ENCODE measurements at regions of chr11 and their contacts with region 1.

Region 1: DNA sequence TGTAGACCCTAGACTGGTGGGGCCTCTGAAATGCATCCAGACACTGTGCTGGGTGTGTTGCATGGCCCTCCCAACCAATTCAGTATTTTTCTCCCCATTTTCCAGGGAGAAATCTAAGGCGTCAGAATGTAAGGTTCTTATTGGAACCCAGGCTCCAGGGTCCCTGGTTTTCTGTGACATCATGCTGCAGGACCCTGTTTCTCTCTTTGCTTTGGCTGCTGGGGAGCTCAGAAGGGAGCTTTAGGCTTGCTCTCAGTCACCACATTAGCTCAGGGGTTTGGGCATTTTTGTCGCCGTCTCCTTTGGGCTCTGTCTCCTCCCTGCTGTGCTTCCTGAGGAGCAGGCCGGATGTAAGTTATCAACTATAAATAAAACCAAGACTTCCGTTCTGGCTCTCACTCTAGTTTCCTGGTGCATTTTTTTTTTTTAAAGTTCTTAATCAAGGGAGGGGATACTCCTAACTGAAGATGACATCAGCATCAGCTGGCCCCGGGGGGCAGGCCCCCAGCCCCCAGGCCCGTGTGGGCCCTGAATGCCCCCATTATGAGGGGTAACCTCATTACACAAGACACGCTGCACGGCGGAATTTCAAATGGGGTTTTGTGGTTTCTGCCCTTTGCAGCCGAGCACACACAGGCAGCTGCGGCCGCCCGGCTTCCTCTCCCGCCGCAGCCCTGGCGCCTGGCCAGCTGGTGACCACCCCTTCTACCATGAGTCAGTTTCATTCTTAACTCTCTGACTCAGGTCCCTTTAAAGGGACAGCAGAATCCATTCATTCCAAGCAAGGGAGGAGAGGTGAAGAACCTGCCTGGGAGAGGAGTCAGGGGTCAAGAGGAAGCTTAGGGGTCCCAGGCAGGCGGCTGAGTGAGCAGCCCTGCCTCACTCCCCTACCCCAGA is 3.2 kb downstream of the MYEOV start:
- DNase-seq: peak; percentile 85
- H3K4me3 ChIP-seq: peak overlapping the region; percentile 72
- H3K27ac ChIP-seq: peak overlapping the region; percentile 84
- H3K4me1 ChIP-seq: peaks cover 68% of the 10 kb centered on the region
- CTCF ChIP-seq: no peak

Region 2: GRCh38 chr11:69101115-69101791 is 195.9 kb before region 1 on chr11:
- CTCF ChIA-PET with region 1: interaction called, 4 read pairs
- POLR2A ChIA-PET with region 1: no interaction called
- intact Hi-C with region 1: loop called (anchors 1 kb)
- DNase-seq: peak; percentile 60
- H3K4me3 ChIP-seq: no peak overlapping the region
- H3K27ac ChIP-seq: no peak overlapping the region
- H3K4me1 ChIP-seq: no peaks in the 10 kb centered on the region
- CTCF ChIP-seq: peak; percentile 90

Region 3: DNA sequence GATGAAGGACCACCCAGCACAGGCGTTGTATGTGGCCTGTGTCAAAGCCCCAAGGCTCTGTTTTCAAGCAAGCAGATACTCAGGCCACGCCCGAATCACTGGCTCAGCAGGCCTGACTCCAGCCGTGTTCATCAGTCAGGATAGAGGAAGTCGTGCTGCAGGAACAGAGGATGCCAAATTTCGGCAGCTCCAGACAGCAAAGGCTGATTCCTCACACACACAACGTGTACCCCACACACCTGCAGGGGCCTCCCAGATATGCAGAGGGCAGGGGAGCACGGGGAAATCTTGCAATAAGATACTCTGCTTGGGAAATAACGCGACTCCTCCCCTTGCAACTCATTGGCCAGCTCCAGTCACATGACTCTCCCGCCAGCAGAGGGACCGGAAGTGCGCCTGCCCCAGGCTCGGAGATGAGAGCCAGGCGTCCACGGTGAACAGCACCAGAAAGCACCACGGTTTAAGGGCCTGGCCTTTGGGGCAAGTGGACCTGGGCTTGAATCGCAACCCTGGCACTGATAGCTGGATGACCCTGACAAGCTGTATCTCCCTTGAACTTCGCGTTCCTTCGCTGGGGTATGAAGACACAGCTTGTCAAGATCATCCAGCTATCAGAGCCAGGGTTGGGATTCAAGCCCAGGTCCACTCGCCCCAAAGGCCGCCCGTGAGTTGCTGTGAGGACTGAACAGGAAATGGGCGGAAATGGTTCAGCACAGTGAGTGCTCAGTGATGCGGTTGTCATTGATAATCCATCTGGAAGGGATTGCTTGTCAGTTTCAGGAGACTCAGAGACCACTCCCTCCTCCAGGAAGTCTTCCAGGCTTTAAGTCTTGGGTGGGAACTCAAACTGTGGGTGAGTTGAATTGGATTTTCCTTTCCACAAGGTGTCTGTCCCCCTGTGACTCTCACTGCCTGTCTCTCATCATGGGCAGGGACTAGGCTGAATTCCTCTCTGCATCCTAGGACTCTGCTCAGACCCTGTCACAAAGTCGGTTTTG is 85.3 kb after region 1 on chr11:
- CTCF ChIA-PET with region 1: no interaction called
- POLR2A ChIA-PET with region 1: interaction called, 4 read pairs
- intact Hi-C with region 1: loop called (anchors 5 kb)
- DNase-seq: peak; percentile 82
- H3K4me3 ChIP-seq: peak overlapping the region; percentile 50
- H3K27ac ChIP-seq: no peak overlapping the region
- H3K4me1 ChIP-seq: peaks cover 12% of the 10 kb centered on the region
- CTCF ChIP-seq: no peak

Region 4: DNA sequence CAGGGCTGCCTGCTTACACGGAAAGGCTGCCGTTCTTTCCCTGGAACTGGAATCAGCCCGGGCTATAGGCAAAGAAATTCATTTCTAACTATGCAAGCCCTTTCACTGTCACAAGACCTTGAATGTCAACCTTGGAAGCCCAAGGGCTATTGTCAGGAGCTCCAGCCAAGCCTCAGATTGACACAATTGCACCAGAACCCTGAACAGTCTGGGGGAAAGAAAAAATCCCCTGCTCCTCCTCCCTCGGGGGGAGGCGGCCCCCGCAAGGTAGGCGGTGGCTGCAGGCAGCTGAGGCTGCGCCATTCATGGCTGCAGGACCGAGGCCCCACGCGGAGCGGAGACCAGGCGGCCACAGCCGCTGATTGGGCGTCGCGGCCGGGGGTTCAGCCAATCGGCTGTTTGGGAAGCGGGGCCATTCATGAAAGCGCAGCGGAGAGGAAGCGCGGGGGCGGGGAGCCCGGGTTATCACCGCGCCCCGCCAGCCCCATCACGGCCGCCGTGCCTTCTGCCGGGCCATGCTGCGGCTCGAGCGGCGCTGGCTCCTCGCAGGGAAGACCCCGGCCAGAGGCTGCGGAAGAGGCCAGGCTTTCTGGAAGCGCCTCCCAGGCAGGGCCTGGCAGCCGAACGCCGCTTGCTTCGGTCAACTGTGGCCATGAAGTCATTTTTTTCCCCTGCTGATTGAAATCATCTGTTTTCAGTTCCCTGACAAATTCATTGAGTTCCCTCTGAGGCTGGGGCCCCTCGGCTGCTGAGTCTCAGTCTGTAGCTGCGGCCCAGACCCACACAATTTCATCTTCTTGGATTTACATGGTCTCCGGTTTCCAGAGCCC is 146.2 kb after region 1 on chr11:
- CTCF ChIA-PET with region 1: no interaction called
- POLR2A ChIA-PET with region 1: no interaction called
- intact Hi-C with region 1: loop called (anchors 10 kb)
- DNase-seq: no peak
- H3K4me3 ChIP-seq: no peak overlapping the region
- H3K27ac ChIP-seq: no peak overlapping the region
- H3K4me1 ChIP-seq: no peaks in the 10 kb centered on the region
- CTCF ChIP-seq: no peak

Region 5: DNA sequence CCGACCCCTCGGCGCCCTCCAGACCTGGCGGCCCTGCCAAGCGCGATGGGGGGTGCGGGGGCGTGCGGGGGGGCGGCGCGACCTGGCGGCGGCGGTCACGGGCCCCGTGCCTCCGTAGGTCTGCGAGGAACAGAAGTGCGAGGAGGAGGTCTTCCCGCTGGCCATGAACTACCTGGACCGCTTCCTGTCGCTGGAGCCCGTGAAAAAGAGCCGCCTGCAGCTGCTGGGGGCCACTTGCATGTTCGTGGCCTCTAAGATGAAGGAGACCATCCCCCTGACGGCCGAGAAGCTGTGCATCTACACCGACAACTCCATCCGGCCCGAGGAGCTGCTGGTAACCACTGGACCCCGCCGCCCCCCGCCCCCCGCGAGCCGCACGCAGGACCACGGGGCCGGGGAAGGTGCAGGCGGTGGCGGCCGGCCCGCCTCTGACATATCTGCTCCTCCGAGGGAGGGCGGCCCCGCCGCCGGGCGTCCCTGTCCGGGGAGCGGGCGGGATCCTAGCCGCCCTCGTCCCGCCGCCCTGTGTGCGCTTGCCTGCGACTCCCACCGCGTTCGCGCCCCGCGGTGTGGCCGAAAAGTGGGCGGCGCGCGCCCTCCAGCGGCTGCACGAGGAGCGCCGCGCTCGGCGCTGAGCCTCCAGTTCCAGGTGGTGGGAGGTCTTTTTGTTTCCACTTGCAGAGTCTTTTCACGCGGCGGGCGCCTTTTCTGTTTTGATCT is 345.9 kb after region 1 on chr11:
- CTCF ChIA-PET with region 1: no interaction called
- POLR2A ChIA-PET with region 1: no interaction called
- intact Hi-C with region 1: loop called (anchors 1 kb)
- DNase-seq: peak; percentile 81
- H3K4me3 ChIP-seq: peak overlapping the region; percentile 69
- H3K27ac ChIP-seq: no peak overlapping the region
- H3K4me1 ChIP-seq: no peaks in the 10 kb centered on the region
- CTCF ChIP-seq: peak; percentile 85